B cell (primary cell): ENCODE measurements at regions of chr4 and their contacts with region 1.

Region 1: GRCh38 chr4:2843263-2843940 is at the start of gene ADD1:
- DNase-seq: peak; percentile 99
- ATAC-seq: peak; percentile 91
- H3K4me3 ChIP-seq: peak within 1 kb of the TSS; percentile 82 to 97 (median 84)
- H3K4me3 Mint-ChIP-seq: peak within 1 kb of the TSS; percentile 92
- H3K27ac ChIP-seq: peak within 1 kb of the TSS; percentile 69 to 79
- H3K27ac Mint-ChIP-seq: peak within 1 kb of the TSS; percentile 97
- H3K4me1 ChIP-seq: peaks cover 48 to 55% of the 10 kb centered on the region in 2 donors
- H3K4me1 Mint-ChIP-seq: peaks cover 60% of the 10 kb centered on the region
- H3K27me3 ChIP-seq: no peaks in the 10 kb centered on the region
- H3K27me3 Mint-ChIP-seq: no peaks in the 10 kb centered on the region
- CTCF ChIP-seq: no peak
- total RNA-seq, gene ADD1: 383 and 417 TPM in 2 replicates

Region 2: DNA sequence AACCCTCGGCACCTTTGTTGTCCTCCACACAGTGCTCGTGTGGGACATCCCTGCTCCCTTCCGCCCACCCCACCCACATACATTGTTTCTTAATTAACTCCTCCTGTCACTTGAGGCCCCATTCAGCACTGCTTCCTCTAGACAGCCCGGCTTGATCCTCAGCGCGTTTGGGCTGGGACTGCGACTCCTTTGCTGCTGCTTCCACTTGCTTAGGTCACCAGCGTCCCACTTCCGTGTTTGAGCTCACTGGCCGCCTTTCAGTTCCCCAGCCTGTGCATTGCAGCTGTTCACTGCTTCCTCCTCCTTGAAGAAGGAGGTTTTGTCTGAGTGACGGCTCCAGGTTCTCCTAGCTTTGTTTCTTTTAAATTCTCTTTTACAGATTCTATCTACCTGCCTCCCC is 358.4 kb before region 1 on chr4:
- CTCF ChIA-PET with region 1: no interaction called
- POLR2A ChIA-PET with region 1: no interaction called
- intact Hi-C with region 1: loop called (anchors 10 kb)
- DNase-seq: peak; percentile 90
- ATAC-seq: peak; percentile 93
- H3K4me3 ChIP-seq: peak overlapping the region; percentile 17 to 54 (median 28)
- H3K4me3 Mint-ChIP-seq: peak overlapping the region; percentile 72
- H3K27ac ChIP-seq: peak overlapping the region; percentile 76 to 89
- H3K27ac Mint-ChIP-seq: peak overlapping the region; percentile 85
- H3K4me1 ChIP-seq: peaks cover 78 to 88% of the 10 kb centered on the region in 2 donors
- H3K4me1 Mint-ChIP-seq: peaks cover 85% of the 10 kb centered on the region
- H3K27me3 ChIP-seq: no peaks in the 10 kb centered on the region
- H3K27me3 Mint-ChIP-seq: no peaks in the 10 kb centered on the region
- CTCF ChIP-seq: no peak

Region 3: GRCh38 chr4:2792711-2793585 is 50.5 kb before region 1 on chr4 and contains the start of gene SH3BP2:
- CTCF ChIA-PET with region 1: interaction called, 3 read pairs
- POLR2A ChIA-PET with region 1: interaction called, 18 read pairs
- intact Hi-C with region 1: no loop called
- DNase-seq: peak; percentile 80
- ATAC-seq: peak; percentile 74
- H3K4me3 ChIP-seq: peak within 1 kb of the TSS; percentile 55 to 84 (median 72)
- H3K4me3 Mint-ChIP-seq: peak within 1 kb of the TSS; percentile 86
- H3K27ac ChIP-seq: peak within 1 kb of the TSS; percentile 24 to 68
- H3K27ac Mint-ChIP-seq: peak within 1 kb of the TSS; percentile 82
- H3K4me1 ChIP-seq: peaks cover 66 to 87% of the 10 kb centered on the region in 2 donors
- H3K4me1 Mint-ChIP-seq: peaks cover 78% of the 10 kb centered on the region
- H3K27me3 ChIP-seq: no peaks in the 10 kb centered on the region
- H3K27me3 Mint-ChIP-seq: no peaks in the 10 kb centered on the region
- CTCF ChIP-seq: no peak
- total RNA-seq, gene SH3BP2: 27.8 and 30.8 TPM in 2 replicates

Region 4: DNA sequence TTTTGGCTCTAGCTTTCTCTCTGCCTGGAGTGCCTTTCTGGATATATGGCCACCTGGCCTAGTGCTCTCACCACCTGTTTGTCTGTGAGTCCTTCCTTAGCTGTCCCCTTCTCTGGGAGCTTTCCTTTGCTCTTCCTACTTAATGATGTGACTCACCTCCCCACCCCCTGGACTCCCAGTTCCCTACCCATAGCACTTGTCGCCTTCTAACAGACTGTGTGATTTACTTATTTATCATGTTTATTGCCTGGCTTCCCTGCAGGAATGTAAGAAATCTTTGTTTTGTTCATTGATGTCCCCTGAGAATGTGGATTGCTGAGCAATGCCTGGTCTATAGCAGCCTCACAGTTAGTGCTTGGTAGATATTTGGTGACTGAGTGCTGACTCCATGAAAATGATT is 19.1 kb after region 1 on chr4:
- CTCF ChIA-PET with region 1: no interaction called
- POLR2A ChIA-PET with region 1: no interaction called
- intact Hi-C with region 1: loop called (anchors 2 kb)
- DNase-seq: no peak
- ATAC-seq: no peak
- H3K4me3 ChIP-seq: no peak overlapping the region
- H3K4me3 Mint-ChIP-seq: peak overlapping the region; percentile 0
- H3K27ac ChIP-seq: peak overlapping the region in 1 of 2 donors; percentile 76
- H3K27ac Mint-ChIP-seq: peak overlapping the region; percentile 38
- H3K4me1 ChIP-seq: peaks cover 85 to 91% of the 10 kb centered on the region in 2 donors
- H3K4me1 Mint-ChIP-seq: peaks cover 88% of the 10 kb centered on the region
- H3K27me3 ChIP-seq: no peaks in the 10 kb centered on the region
- H3K27me3 Mint-ChIP-seq: no peaks in the 10 kb centered on the region
- CTCF ChIP-seq: no peak